ENCODE measurements at regions of chr6 and their contacts with region 1.

Region 1: DNA sequence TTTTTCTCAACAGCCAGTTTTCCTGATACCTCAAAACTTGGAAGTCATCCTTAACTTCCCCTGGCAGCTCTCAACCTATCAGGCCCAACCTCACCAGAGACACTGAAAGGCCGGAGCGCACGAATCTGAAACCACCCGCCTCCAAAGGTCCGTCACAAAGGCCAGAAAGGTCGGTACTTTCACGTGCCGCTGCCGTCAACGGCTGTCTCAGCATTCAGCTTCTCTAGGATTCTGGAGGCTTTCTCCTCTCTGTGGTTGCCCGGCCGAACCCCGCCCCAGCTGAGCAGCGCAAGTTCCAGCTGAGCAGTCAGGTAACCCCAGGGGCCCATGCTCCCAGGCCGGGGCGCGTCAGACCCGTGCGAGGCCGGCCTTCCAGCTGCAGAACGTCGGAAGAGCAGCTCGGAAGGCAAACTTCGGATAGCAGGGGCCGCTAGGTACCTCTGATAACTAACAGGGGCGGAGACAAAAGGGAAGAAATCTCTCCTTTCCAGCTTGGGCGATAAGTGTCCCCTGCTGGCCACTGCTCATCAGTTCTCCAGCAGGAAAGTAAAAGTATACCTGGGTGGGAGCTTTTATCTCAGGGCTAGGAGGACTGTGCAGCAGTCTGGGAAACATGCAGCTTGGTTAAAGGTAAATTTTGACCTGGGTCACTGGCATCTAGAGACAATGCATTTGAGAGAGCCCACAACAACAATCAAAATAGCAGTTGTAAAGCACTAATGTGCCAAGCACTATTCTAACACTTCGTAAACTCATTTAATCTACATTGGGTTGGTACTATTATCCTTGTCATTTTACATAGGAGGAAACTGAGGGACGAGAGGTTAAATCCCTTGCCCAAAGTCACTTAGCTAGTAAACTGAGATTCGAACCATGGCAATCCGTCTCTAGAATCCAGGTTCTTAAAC is 16.1 kb downstream of the ZSCAN12 start:
- DNase-seq: peak; percentile 93
- ATAC-seq: peak; percentile 98
- H3K4me3 ChIP-seq: peak overlapping the region; percentile 59 to 74 (median 72)
- H3K27ac ChIP-seq: peak overlapping the region; percentile 56
- H3K4me1 ChIP-seq: peaks cover 39% of the 10 kb centered on the region
- H3K27me3 ChIP-seq: no peaks in the 10 kb centered on the region
- CTCF ChIP-seq: peak; percentile 72
- EP300 ChIP-seq: peak in 1 of 2 experiments; percentile 35; a peak in 2 of 4 replicates
- POLR2A ChIP-seq: peak; percentile 41 to 70; a peak in 2 of 4 replicates
- RAD21 ChIP-seq: peak; percentile 75

Region 2: GRCh38 chr6:28218271-28219248 is 164.9 kb before region 1 on chr6:
- CTCF ChIA-PET with region 1: no interaction called
- POLR2A ChIA-PET with region 1: interaction called, 13 read pairs
- in situ Hi-C with region 1: no loop called
- intact Hi-C with region 1: no loop called
- DNase-seq: peak; percentile 70
- ATAC-seq: peak; percentile 93
- H3K4me3 ChIP-seq: peak overlapping the region; percentile 53 to 77 (median 56)
- H3K27ac ChIP-seq: peak overlapping the region; percentile 79
- H3K4me1 ChIP-seq: peaks cover 55% of the 10 kb centered on the region
- H3K27me3 ChIP-seq: no peaks in the 10 kb centered on the region; a peak in 1 of 5 replicates
- CTCF ChIP-seq: peak; percentile 49
- EP300 ChIP-seq: no peak
- POLR2A ChIP-seq: peak; percentile 42 to 77; a peak in 2 of 4 replicates
- RAD21 ChIP-seq: peak; percentile 50

Region 3: GRCh38 chr6:28335564-28336283 is 47.8 kb before region 1 on chr6 and contains the start of gene ZSCAN31:
- CTCF ChIA-PET with region 1: no interaction called
- POLR2A ChIA-PET with region 1: interaction called, 19 read pairs
- in situ Hi-C with region 1: no loop called
- intact Hi-C with region 1: no loop called
- DNase-seq: peak; percentile 99
- ATAC-seq: peak; percentile 98
- H3K4me3 ChIP-seq: peak within 1 kb of the TSS; percentile 78 to 94 (median 80)
- H3K27ac ChIP-seq: peak within 1 kb of the TSS; percentile 96
- H3K4me1 ChIP-seq: peaks cover 25% of the 10 kb centered on the region
- H3K27me3 ChIP-seq: no peaks in the 10 kb centered on the region; a peak in 1 of 5 replicates
- CTCF ChIP-seq: no peak; the same call in 1 of the 2 replicates
- EP300 ChIP-seq: peak; percentile 18 to 34; a peak in 1 of 4 replicates
- POLR2A ChIP-seq: peak; percentile 80 to 99
- RAD21 ChIP-seq: 0 out of 2 replicates have a peak, but pooled peaks have one; percentile 17
- total RNA-seq, gene ZSCAN31: 6.2 and 7.2 TPM in 2 replicates

Region 4: GRCh38 chr6:28355743-28356665 is 27.5 kb before region 1 on chr6:
- CTCF ChIA-PET with region 1: no interaction called
- POLR2A ChIA-PET with region 1: interaction called, 27 read pairs
- in situ Hi-C with region 1: no loop called
- intact Hi-C with region 1: loop called (anchors 2 kb)
- DNase-seq: peak; percentile 90
- ATAC-seq: peak; percentile 89
- H3K4me3 ChIP-seq: peak overlapping the region; percentile 70 to 82 (median 77)
- H3K27ac ChIP-seq: peak overlapping the region; percentile 75
- H3K4me1 ChIP-seq: peaks cover 33% of the 10 kb centered on the region
- H3K27me3 ChIP-seq: no peaks in the 10 kb centered on the region; a peak in 1 of 5 replicates
- CTCF ChIP-seq: peak; percentile 91
- EP300 ChIP-seq: no peak
- POLR2A ChIP-seq: peak in 1 of 2 experiments; percentile 65; a peak in 1 of 4 replicates
- RAD21 ChIP-seq: peak; percentile 81

Region 5: GRCh38 chr6:28542440-28543296 is 159.2 kb after region 1 on chr6:
- CTCF ChIA-PET with region 1: no interaction called
- POLR2A ChIA-PET with region 1: no interaction called
- in situ Hi-C with region 1: no loop called
- intact Hi-C with region 1: loop called (anchors 1 kb)
- DNase-seq: peak; percentile 80
- ATAC-seq: peak; percentile 84
- H3K4me3 ChIP-seq: peak overlapping the region; percentile 53 to 76 (median 64)
- H3K27ac ChIP-seq: no peak overlapping the region
- H3K4me1 ChIP-seq: peaks cover 22% of the 10 kb centered on the region
- H3K27me3 ChIP-seq: peaks cover 0 to 3% of the 10 kb centered on the region in 2 experiments; a peak in 2 of 5 replicates
- CTCF ChIP-seq: peak; percentile 75
- EP300 ChIP-seq: no peak
- POLR2A ChIP-seq: no peak
- RAD21 ChIP-seq: peak; percentile 71

Region 6: GRCh38 chr6:28565823-28566526 is 182.5 kb after region 1 on chr6:
- CTCF ChIA-PET with region 1: no interaction called
- POLR2A ChIA-PET with region 1: no interaction called
- in situ Hi-C with region 1: no loop called
- intact Hi-C with region 1: no loop called
- DNase-seq: peak; percentile 83
- ATAC-seq: peak; percentile 93
- H3K4me3 ChIP-seq: no peak overlapping the region
- H3K27ac ChIP-seq: peak overlapping the region; percentile 53
- H3K4me1 ChIP-seq: peaks cover 20% of the 10 kb centered on the region
- H3K27me3 ChIP-seq: no peaks in the 10 kb centered on the region
- CTCF ChIP-seq: no peak
- EP300 ChIP-seq: peak in 1 of 2 experiments; percentile 70; a peak in 2 of 4 replicates
- POLR2A ChIP-seq: no peak
- RAD21 ChIP-seq: no peak

Measured in HepG2 (cell line).